ENCODE measurements at regions of chr16 and their contacts with region 1.

Region 1: DNA sequence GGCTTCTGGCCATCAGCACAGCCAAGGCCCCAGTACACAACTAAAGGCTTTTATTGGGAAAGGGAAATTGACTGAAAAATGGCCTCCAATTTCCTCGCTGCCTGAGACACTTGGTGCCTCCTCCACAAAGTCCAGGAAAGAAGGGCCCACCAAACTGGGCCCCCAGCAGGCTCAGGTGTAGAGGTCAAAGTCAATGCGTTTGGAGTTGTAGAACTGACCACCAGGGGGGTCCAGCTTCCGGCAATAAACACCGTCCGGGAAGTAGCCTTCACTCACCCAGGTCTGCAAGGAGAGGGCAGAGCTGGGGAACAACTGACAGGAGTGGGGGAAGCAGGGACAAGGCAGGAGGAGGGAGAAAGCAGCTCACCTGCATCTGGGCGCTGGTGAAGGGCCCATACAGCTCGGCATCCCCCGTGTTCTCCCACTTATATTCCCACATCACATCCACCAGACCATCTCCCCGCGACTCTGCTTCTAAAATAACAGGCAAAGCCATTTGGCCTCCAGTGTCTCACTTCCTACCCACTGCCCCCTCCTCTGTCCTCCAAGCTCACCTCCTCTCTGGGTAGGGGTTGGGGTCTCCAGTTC is 2.2 kb downstream of the CD2BP2 start:
- DNase-seq: no peak
- ATAC-seq: no peak
- H3K4me3 ChIP-seq: no peak overlapping the region
- H3K27ac ChIP-seq: peak overlapping the region; percentile 83
- H3K4me1 ChIP-seq: peaks cover 33% of the 10 kb centered on the region
- H3K27me3 ChIP-seq: no peaks in the 10 kb centered on the region
- CTCF ChIP-seq: 0 out of 2 replicates have a peak, but pooled peaks have one; percentile 18

Region 2: DNA sequence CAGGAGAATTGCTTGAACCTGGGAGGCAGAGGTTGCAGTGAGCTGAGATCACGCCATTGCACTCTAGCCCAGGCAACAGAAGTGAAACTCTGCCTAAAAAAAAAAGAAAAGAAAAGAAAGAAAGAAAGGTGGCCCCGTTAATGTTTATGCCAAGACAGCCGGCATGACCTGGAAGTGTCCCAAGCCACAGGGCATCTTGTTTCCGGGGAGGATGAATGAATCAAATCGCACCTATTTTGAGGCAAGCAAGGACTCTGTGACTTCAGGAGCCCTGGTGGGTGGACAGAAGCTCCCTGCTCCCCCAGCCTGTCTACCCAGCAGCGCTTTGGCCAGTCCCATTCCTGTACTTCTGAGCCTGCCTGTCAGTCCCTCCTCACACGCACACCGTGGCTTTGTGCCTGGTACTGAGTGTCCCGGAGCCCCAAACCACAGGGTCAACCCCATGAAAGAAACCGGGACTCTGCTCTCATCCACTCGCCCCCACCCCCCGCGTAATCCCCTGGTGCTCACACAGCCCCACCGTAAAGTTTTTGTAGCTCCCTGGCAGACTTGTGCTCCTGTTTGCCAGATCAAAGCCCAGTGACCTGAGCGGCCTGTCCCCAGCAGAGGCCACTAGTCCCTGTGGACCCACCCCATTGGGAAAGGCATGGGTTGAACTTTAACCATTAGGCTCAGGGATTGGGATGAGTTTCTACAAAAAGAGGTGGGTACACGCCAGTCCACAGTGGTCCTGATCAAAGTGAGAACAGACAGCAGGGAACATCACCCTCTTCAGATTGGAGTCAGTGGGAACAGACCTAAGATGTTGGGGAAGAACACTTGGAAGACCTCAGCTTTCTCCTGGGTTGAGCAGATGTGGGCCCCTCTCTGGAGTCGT is 17.1 kb before region 1 on chr16:
- CTCF ChIA-PET with region 1: no interaction called
- POLR2A ChIA-PET with region 1: interaction called, 19 read pairs
- intact Hi-C with region 1: no loop called
- DNase-seq: peak; percentile 50
- ATAC-seq: peak; percentile 30
- H3K4me3 ChIP-seq: peak overlapping the region; percentile 70
- H3K27ac ChIP-seq: peak overlapping the region; percentile 58; the same call in 1 of the 2 replicates
- H3K4me1 ChIP-seq: peaks cover 8% of the 10 kb centered on the region; the same call in 1 of the 2 replicates
- H3K27me3 ChIP-seq: no peaks in the 10 kb centered on the region
- CTCF ChIP-seq: no peak

Measured in PC-3 (cell line).